ENCODE measurements at regions of chr19 and their contacts with region 1.

Region 1: GRCh38 chr19:5790573-5791520 is at the start of gene DUS3L:
- DNase-seq: peak; percentile 99
- ATAC-seq: peak; percentile 96
- H3K4me3 Mint-ChIP-seq: peak within 1 kb of the TSS; percentile 100
- H3K27ac Mint-ChIP-seq: peak within 1 kb of the TSS; percentile 100
- H3K4me1 Mint-ChIP-seq: peaks cover 17% of the 10 kb centered on the region
- H3K27me3 Mint-ChIP-seq: no peaks in the 10 kb centered on the region
- CTCF ChIP-seq: no peak
- total RNA-seq, gene DUS3L: 69.6 to 74.5 TPM

Region 2: DNA sequence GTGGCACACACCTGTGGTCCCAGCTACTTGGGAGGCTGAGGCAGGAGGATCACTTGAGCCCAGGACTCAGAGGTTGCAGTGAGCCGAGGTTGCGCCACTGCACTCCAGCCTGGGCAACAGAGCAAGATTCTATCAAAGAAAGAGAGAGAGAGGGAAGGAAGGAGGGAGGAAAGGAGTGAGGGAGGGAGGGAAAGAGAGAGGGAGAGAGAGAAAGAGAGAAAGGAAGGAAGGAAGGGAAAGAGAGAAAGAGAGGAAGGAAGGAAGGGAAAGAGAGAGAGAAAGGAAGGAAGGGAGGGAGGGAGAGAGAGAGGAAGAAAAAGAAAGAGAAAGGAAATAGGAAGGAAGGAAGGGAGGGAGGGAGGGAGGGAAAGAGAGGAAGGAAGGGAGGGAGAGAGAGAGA is 26.4 kb after region 1 on chr19:
- CTCF ChIA-PET with region 1: no interaction called
- POLR2A ChIA-PET with region 1: no interaction called
- intact Hi-C with region 1: no loop called
- DNase-seq: no peak
- ATAC-seq: no peak
- H3K4me3 Mint-ChIP-seq: no peak overlapping the region
- H3K27ac Mint-ChIP-seq: no peak overlapping the region
- H3K4me1 Mint-ChIP-seq: no peaks in the 10 kb centered on the region
- H3K27me3 Mint-ChIP-seq: peaks cover 5% of the 10 kb centered on the region
- CTCF ChIP-seq: no peak

Region 3: GRCh38 chr19:5827891-5828660 is 37.2 kb after region 1 on chr19:
- CTCF ChIA-PET with region 1: interaction called, 3 read pairs
- POLR2A ChIA-PET with region 1: interaction called, 16 read pairs
- intact Hi-C with region 1: no loop called
- DNase-seq: peak; percentile 96
- ATAC-seq: peak; percentile 83
- H3K4me3 Mint-ChIP-seq: peak overlapping the region; percentile 89
- H3K27ac Mint-ChIP-seq: peak overlapping the region; percentile 95
- H3K4me1 Mint-ChIP-seq: peaks cover 7% of the 10 kb centered on the region
- H3K27me3 Mint-ChIP-seq: no peaks in the 10 kb centered on the region
- CTCF ChIP-seq: no peak

Region 4: DNA sequence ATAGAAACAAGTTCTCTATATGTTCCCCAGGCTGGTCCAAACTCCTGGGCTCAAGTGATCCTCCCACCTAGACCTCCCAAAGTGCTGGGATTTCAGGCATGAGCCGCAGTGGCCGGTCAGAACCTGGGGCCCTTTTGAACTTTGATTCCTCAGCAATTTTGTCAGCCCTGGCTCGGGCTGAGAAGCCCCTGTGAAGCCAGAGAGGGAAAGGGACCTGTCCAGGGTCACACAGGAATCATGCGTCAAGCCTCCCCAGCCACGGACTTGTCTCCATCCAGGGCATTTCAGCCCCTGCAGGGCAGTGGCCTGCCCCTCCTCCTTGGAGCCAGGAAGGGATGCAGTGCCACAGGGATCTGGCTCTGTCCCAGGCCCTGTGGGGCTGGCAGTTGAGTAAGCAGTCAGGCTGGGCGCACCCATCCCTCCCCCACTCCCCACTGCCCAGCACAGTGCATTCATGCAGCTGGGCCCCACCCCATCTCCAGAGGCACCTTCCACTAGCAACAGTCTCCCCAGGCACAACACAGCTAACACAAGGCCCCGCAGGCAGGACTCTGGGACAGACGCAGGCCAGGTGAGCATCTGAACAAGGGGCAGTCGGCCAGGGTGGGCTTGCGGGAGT is 123.0 kb after region 1 on chr19 and contains the start of gene CAPS:
- CTCF ChIA-PET with region 1: no interaction called
- POLR2A ChIA-PET with region 1: no interaction called
- intact Hi-C with region 1: no loop called
- DNase-seq: no peak
- ATAC-seq: no peak
- H3K4me3 Mint-ChIP-seq: no peak within 1 kb of the TSS
- H3K27ac Mint-ChIP-seq: no peak within 1 kb of the TSS
- H3K4me1 Mint-ChIP-seq: no peaks in the 10 kb centered on the region
- H3K27me3 Mint-ChIP-seq: no peaks in the 10 kb centered on the region
- CTCF ChIP-seq: no peak
- total RNA-seq, gene CAPS: 2.1 to 2.8 TPM